ENCODE measurements at regions of chr6 and their contacts with region 1.

Region 1: GRCh38 chr6:53171605-53172446 is 23.2 kb upstream of the GCM1 start:
- DNase-seq: peak; percentile 78
- CTCF ChIP-seq: peak; percentile 100

Region 2: GRCh38 chr6:53410508-53411258 is 238.9 kb after region 1 on chr6:
- in situ Hi-C with region 1: loop called (anchors 10 kb)
- DNase-seq: peak; percentile 52
- CTCF ChIP-seq: peak; percentile 95

Region 3: DNA sequence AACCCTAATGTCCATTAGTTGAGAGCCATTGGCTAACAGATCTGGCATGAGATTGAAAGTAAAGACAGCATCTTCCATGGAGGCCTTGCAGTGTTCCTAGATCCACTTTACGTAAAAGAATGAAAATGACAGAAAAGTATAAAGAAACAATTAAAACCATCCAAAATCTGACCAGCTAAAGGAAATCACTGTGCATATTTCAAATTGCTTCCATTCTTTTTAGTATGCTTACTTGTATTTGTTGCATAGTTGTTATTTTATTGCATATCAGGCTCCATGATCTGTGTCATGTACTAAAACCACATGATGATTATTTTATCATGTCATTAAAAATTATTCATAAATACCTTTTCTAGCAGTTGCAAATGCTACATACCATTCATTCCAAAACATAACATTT is 305.1 kb after region 1 on chr6:
- in situ Hi-C with region 1: loop called (anchors 10 kb)
- DNase-seq: no peak
- CTCF ChIP-seq: no peak

Region 4: DNA sequence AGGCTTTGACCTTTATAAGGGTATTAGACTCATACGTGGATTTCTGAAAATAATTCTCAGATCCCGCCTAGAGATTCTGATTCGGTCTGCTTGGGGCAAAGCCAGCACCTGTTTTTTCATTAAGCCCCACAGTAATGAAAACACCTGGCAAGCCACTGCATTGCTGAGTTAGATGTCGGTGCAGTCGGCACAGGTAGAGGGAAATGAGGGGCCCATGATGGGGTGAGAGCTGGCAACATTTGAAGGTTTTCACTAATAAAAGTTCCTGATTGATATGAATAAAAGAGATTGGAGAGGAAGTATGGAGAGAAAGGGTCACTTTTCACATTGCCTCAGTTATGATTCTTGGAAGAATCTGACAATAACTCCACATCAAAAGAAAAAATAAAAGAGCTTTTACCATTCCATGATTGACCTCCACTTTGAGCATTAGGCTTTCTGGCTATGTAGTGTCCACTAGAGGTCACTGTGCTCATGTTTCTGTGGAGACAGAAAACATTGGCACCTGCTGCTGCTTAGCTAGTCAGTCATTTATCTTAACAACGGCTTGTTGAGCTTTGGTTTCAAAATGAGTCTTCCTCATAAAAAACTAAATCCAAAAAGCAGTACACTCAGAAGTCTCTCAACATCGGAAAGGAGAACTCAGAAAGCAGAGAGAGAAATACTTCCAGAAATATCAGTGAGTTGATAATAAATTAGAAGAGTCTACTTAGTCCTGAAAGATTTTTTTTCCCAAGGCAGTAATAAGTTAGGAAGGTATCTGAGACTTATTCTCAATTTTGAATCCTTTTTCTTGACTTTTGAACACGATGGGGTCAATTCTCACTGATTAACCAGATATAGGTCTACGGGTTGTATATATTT is 547.0 kb after region 1 on chr6:
- in situ Hi-C with region 1: loop called (anchors 25 kb)
- DNase-seq: peak; percentile 79
- CTCF ChIP-seq: peak; percentile 70